Caco-2 (cell line): ENCODE measurements at regions of chr2 and their contacts with region 1.

Region 1: GRCh38 chr2:205670293-205670692 is 12.0 kb upstream of the NRP2 start:
- DNase-seq: no peak
- H3K4me3 ChIP-seq: no peak overlapping the region
- H3K4me3 Mint-ChIP-seq: no peak overlapping the region
- H3K27ac Mint-ChIP-seq: no peak overlapping the region
- H3K4me1 ChIP-seq: peaks cover 8% of the 10 kb centered on the region
- H3K4me1 Mint-ChIP-seq: no peaks in the 10 kb centered on the region
- H3K27me3 ChIP-seq: no peaks in the 10 kb centered on the region
- H3K27me3 Mint-ChIP-seq: no peaks in the 10 kb centered on the region
- CTCF ChIP-seq: no peak

Region 2: GRCh38 chr2:205590759-205591158 is 79.5 kb before region 1 on chr2:
- CTCF ChIA-PET with region 1: no interaction called
- POLR2A ChIA-PET with region 1: interaction called, 20 read pairs
- intact Hi-C with region 1: no loop called
- DNase-seq: no peak
- H3K4me3 ChIP-seq: no peak overlapping the region
- H3K4me3 Mint-ChIP-seq: no peak overlapping the region
- H3K27ac Mint-ChIP-seq: no peak overlapping the region
- H3K4me1 ChIP-seq: no peaks in the 10 kb centered on the region
- H3K4me1 Mint-ChIP-seq: no peaks in the 10 kb centered on the region
- H3K27me3 ChIP-seq: no peaks in the 10 kb centered on the region
- H3K27me3 Mint-ChIP-seq: no peaks in the 10 kb centered on the region
- CTCF ChIP-seq: no peak

Region 3: DNA sequence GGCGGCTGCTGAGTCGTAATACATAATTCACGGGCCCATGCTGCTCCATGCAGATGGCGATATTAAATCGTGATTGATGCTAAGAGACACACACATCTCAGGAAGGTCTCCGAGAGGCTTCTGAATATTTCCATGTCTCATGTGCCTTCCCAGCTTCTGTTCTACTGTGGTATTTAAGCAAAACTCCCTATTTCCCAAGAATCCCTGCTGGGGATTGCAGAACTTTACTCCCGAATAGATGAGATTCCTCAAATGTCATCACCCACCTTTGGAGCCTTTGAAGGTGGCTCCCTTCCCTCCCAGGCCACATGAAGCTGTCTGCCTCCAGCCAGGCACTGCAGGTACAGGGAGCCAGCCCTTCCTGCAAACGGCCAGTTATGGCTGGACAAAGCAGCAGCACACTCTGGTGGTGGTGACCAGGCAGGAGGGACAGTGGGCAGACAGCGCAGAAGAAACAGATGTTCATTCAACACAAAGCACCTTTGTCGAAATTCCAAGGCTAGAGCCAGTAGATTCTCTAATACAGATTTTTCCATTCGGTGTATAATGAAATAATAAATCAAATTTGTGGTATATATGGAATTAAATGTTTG is 26.1 kb after region 1 on chr2:
- CTCF ChIA-PET with region 1: no interaction called
- POLR2A ChIA-PET with region 1: no interaction called
- intact Hi-C with region 1: no loop called
- DNase-seq: peak; percentile 81 to 85
- H3K4me3 ChIP-seq: no peak overlapping the region
- H3K4me3 Mint-ChIP-seq: no peak overlapping the region
- H3K27ac Mint-ChIP-seq: peak overlapping the region; percentile 43
- H3K4me1 ChIP-seq: peaks cover 57% of the 10 kb centered on the region
- H3K4me1 Mint-ChIP-seq: peaks cover 50% of the 10 kb centered on the region
- H3K27me3 ChIP-seq: no peaks in the 10 kb centered on the region
- H3K27me3 Mint-ChIP-seq: no peaks in the 10 kb centered on the region
- CTCF ChIP-seq: peak; percentile 60 to 85